Activated CD4-positive, alpha-beta T cell treated with anti-CD3 and anti-CD28 coated beads for 36 hours (primary cell): ENCODE measurements at regions of chr5 and their contacts with region 1.

Region 1: GRCh38 chr5:33588654-33589372 is 148.0 kb downstream of the TARS1 start:
- DNase-seq: peak; percentile 74
- ATAC-seq: peak; percentile 69
- H3K4me3 Mint-ChIP-seq: no peak overlapping the region
- H3K27ac Mint-ChIP-seq: no peak overlapping the region
- H3K4me1 Mint-ChIP-seq: no peaks in the 10 kb centered on the region
- H3K27me3 Mint-ChIP-seq: peaks cover 4% of the 10 kb centered on the region

Region 2: DNA sequence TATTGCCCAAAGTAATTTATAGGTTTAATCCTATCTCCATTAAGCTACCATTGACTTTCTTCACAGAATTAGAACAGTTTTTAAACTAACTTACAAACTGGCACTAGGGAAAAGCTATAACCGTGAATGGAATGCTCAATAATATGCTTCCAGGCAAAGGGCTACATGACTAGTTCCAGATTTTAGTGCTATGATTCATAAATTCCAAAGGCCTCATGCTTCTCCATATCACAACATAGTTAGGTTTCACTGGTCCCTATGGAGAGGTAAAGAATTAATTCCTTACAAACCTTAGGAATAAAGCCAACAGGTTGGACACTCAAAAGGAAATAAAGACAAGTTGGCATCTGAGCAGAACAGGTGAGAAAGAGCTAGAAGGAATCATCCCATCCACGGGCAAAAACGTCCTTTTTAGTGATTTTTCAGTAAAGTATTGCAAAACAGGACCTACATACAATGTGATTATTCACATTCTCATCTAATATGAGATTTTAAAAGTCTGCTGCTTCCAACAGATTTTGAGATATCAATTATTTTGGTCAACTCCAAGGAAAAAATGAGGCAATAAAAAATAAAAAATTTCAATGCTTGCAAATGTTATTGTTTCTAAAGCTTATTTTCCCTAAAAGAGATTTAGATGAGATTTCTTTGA is 245.0 kb before region 1 on chr5:
- CTCF ChIA-PET with region 1: no interaction called
- POLR2A ChIA-PET with region 1: no interaction called
- intact Hi-C with region 1: no loop called
- DNase-seq: no peak
- ATAC-seq: no peak
- H3K4me3 Mint-ChIP-seq: no peak overlapping the region
- H3K27ac Mint-ChIP-seq: no peak overlapping the region
- H3K4me1 Mint-ChIP-seq: no peaks in the 10 kb centered on the region
- H3K27me3 Mint-ChIP-seq: no peaks in the 10 kb centered on the region

Region 3: GRCh38 chr5:33433303-33434240 is 155.2 kb before region 1 on chr5:
- CTCF ChIA-PET with region 1: interaction called, 7 read pairs
- POLR2A ChIA-PET with region 1: no interaction called
- intact Hi-C with region 1: loop called (anchors 5 to 10 kb)
- DNase-seq: no peak
- ATAC-seq: no peak
- H3K4me3 Mint-ChIP-seq: no peak overlapping the region
- H3K27ac Mint-ChIP-seq: no peak overlapping the region
- H3K4me1 Mint-ChIP-seq: peaks cover 8% of the 10 kb centered on the region
- H3K27me3 Mint-ChIP-seq: peaks cover 2% of the 10 kb centered on the region

Region 4: GRCh38 chr5:33936004-33936380 is 347.2 kb after region 1 on chr5:
- CTCF ChIA-PET with region 1: interaction called, 26 read pairs
- POLR2A ChIA-PET with region 1: no interaction called
- intact Hi-C with region 1: loop called (anchors 1 to 2 kb)
- DNase-seq: peak; percentile 75
- ATAC-seq: peak; percentile 49
- H3K4me3 Mint-ChIP-seq: no peak overlapping the region
- H3K27ac Mint-ChIP-seq: no peak overlapping the region
- H3K4me1 Mint-ChIP-seq: no peaks in the 10 kb centered on the region
- H3K27me3 Mint-ChIP-seq: peaks cover 41% of the 10 kb centered on the region